A673 (cell line): ENCODE measurements at regions of chr5 and their contacts with region 1.

Region 1: GRCh38 chr5:113437111-113437510 is 2.3 kb upstream of the TSSK1B start:
- DNase-seq: no peak
- H3K4me3 ChIP-seq: no peak overlapping the region
- H3K27ac ChIP-seq: no peak overlapping the region
- H3K4me1 ChIP-seq: no peaks in the 10 kb centered on the region
- H3K27me3 ChIP-seq: peaks cover 9% of the 10 kb centered on the region
- CTCF ChIP-seq: no peak

Region 2: DNA sequence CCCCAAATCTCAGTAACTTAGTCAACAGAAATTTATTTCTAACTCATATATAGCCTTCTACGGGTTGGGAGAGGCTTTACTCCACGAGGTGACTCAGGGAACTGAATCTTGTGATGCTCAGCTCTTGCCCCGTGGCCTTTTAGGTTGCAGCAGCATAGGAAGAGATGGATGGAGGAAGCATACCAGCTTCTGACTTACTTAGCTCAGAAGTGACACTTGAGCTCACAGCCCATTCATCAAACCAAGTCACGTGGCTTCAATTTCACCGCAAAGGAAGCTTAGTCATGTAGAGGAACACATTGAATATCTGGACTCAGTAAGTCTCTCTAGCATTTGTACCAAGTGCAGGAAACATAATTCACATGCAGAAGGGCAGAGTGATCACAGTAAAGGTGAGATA is 800.7 kb after region 1 on chr5:
- CTCF ChIA-PET with region 1: no interaction called
- POLR2A ChIA-PET with region 1: interaction called, 10 read pairs
- intact Hi-C with region 1: no loop called
- DNase-seq: peak; percentile 2
- H3K4me3 ChIP-seq: no peak overlapping the region
- H3K27ac ChIP-seq: no peak overlapping the region
- H3K4me1 ChIP-seq: no peaks in the 10 kb centered on the region
- H3K27me3 ChIP-seq: no peaks in the 10 kb centered on the region
- CTCF ChIP-seq: no peak